Caco-2 (cell line): ENCODE measurements at regions of chr19 and their contacts with region 1.

Region 1: GRCh38 chr19:17327651-17328516 is 6.8 kb downstream of the ANO8 start:
- DNase-seq: peak; percentile 74 to 86
- H3K4me3 ChIP-seq: peak overlapping the region; percentile 57
- H3K4me3 Mint-ChIP-seq: peak overlapping the region; percentile 75
- H3K27ac Mint-ChIP-seq: peak overlapping the region; percentile 50
- H3K4me1 ChIP-seq: peaks cover 20% of the 10 kb centered on the region
- H3K4me1 Mint-ChIP-seq: no peaks in the 10 kb centered on the region
- H3K27me3 ChIP-seq: no peaks in the 10 kb centered on the region
- H3K27me3 Mint-ChIP-seq: no peaks in the 10 kb centered on the region
- CTCF ChIP-seq: peak in 1 of 2 experiments; percentile 36

Region 2: GRCh38 chr19:17292286-17293097 is 35.4 kb before region 1 on chr19:
- CTCF ChIA-PET with region 1: interaction called, 4 read pairs
- POLR2A ChIA-PET with region 1: no interaction called
- intact Hi-C with region 1: loop called (anchors 5 kb)
- DNase-seq: peak; percentile 91 to 92
- H3K4me3 ChIP-seq: peak overlapping the region; percentile 70
- H3K4me3 Mint-ChIP-seq: peak overlapping the region; percentile 83
- H3K27ac Mint-ChIP-seq: peak overlapping the region; percentile 84
- H3K4me1 ChIP-seq: no peaks in the 10 kb centered on the region
- H3K4me1 Mint-ChIP-seq: no peaks in the 10 kb centered on the region
- H3K27me3 ChIP-seq: no peaks in the 10 kb centered on the region
- H3K27me3 Mint-ChIP-seq: no peaks in the 10 kb centered on the region
- CTCF ChIP-seq: peak; percentile 68 to 77